Activated T-helper 1 cell treated with anti-CD3 and anti-CD28 coated beads, Interleukin-12 subunit alpha, Interleukin-12 subunit beta, Interleukin-2, Interleukin-4 antibody, amounts not matched to agents 30 ng/mL and 10 ng/mL and 1 ng/mL, durations not matched to agents 14 hours and 24 hours and 36 hours (primary cell): ENCODE measurements at regions of chr22 and their contacts with region 1.

Region 1: GRCh38 chr22:44497218-44497904 is 672 bp downstream of the RTL6 start:
- DNase-seq: no peak
- H3K4me3 Mint-ChIP-seq: peak overlapping the region; percentile 81
- H3K27ac Mint-ChIP-seq: no peak overlapping the region
- H3K4me1 Mint-ChIP-seq: peaks cover 30% of the 10 kb centered on the region
- H3K27me3 Mint-ChIP-seq: no peaks in the 10 kb centered on the region

Region 2: DNA sequence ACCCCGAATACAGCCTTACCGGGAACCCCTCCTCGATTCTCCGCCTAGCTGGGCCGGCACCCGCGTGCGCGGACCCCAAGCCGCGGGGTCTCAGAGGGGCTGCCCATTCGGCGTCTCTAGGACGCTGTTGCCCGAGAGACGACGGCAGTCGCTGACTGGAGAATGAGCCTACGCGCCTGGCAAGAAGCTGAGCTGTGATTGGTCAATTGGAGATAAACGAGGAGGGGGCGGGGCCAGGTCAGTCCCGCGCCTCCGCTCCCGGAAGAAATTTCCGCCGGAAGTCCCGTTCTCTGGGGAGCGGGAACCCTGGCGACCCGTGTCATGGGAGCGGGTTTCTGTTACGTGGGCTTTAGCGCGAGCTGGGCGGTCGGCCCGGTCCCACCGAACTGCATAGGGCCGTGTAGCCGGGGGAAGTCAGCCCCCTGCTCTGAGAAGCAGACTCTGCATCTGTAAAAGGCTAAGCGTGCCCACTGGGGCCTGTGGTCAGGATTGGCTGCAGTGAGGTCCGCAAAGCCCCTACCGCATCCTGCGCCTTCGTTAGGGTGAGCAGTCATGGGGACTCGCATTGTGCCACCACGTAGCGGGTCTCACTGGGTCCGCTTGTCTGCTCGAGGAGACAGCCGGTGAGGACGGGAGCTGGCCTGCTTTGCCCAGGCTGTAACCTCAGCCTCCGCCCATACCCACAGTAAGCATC is 685.1 kb before region 1 on chr22 and contains the start of gene EFCAB6:
- intact Hi-C with region 1: loop called (anchors 5 kb)
- DNase-seq: peak; percentile 86
- H3K4me3 Mint-ChIP-seq: peak within 1 kb of the TSS; percentile 94
- H3K27ac Mint-ChIP-seq: peak within 1 kb of the TSS; percentile 88
- H3K4me1 Mint-ChIP-seq: peaks cover 39% of the 10 kb centered on the region
- H3K27me3 Mint-ChIP-seq: peaks cover 5% of the 10 kb centered on the region
- total RNA-seq, gene EFCAB6: 0.17 TPM in 1 of 2 replicates, not detected in the other

Region 3: DNA sequence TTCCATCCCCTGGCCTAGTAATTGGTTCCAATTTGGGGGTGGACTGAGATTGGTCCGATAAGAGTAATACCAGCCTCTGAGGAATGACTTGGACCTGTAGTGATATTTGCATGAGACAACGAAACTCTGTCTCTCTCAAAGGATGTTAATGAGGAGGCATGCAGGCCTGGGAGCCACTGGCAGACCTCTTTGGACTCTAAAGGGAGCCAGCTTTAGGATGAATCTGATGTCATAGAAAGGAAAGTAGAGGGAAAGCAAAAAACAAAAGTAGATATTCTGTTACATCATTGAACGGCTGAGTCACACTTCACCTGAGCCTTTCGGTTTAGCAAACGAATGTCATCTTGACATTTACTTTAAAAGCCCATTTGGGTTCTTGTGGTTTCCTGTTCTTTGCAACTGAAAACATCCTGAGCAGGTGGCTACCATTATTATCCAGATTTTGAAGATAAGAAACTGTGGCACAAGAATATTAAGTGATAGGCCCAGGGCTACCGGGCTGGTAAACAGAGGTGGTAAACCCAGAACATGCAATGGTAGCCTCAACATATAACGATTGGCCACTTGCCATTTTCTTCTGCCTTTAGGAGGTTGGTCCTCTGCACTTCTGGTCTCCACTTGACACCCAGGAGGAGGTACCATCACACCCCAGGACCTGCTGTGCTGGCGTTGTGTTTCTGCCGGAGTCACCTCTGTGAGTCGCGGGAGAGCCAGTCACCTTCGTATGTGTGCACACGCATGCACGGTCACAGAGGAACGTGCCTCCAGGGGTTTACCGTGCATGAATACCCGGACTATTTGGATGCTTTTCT is 42.0 kb before region 1 on chr22:
- intact Hi-C with region 1: loop called (anchors 1 kb)
- DNase-seq: peak; percentile 34
- H3K4me3 Mint-ChIP-seq: peak overlapping the region; percentile 56
- H3K27ac Mint-ChIP-seq: peak overlapping the region; percentile 93
- H3K4me1 Mint-ChIP-seq: peaks cover 31% of the 10 kb centered on the region
- H3K27me3 Mint-ChIP-seq: peaks cover 7% of the 10 kb centered on the region

Region 4: DNA sequence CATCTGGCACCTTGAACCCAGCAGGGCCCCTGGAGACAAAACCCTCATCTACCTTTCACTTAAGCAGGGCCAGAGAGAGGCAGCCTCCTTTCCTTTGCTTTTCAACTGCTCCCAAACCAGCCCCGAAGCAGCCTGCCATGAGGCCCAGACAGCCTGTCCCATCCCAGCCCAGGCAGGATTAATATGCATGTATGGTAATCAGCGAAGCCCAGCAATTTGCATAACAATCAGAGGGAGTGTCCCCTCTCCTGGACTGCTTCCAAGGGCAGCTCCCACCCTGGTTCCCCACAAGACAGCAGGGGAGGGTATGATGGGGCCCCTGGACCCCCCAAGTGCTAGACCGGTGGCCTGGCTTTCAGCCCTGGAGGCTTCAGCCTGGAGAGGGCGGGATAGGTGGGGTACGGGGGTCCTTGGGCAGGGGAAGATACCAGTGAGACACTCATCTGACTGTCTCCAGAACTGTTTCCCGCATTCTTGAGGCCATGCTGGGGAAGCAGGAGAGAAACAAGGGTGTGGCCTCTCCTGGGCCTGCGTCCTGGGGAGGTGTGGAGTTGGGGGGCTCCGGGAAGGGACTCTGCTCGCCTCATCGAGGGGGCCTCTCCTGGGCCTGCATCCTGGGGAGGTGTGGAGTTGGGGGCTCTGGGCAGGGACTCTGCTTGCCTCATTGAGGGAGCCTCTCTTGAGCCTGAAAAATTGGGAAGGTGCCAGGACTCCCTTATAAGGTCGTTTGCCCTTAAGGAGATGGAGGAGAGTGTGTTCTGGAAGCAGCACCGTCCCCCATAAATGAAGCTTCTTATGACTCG is 111.4 kb after region 1 on chr22:
- intact Hi-C with region 1: no loop called
- DNase-seq: no peak
- H3K4me3 Mint-ChIP-seq: no peak overlapping the region
- H3K27ac Mint-ChIP-seq: no peak overlapping the region
- H3K4me1 Mint-ChIP-seq: no peaks in the 10 kb centered on the region
- H3K27me3 Mint-ChIP-seq: peaks cover 5% of the 10 kb centered on the region

Region 5: GRCh38 chr22:45185718-45186514 is 688.6 kb after region 1 on chr22:
- intact Hi-C with region 1: no loop called
- DNase-seq: no peak
- H3K4me3 Mint-ChIP-seq: no peak overlapping the region
- H3K27ac Mint-ChIP-seq: no peak overlapping the region
- H3K4me1 Mint-ChIP-seq: peaks cover 8% of the 10 kb centered on the region
- H3K27me3 Mint-ChIP-seq: no peaks in the 10 kb centered on the region